Activated CD4-positive, alpha-beta T cell treated with anti-CD3 and anti-CD28 coated beads, Interleukin-2, amount 10 ng/mL, durations not matched to agents 24 days and 14 days (primary cell): ENCODE measurements at regions of chr2 and their contacts with region 1.

Region 1: DNA sequence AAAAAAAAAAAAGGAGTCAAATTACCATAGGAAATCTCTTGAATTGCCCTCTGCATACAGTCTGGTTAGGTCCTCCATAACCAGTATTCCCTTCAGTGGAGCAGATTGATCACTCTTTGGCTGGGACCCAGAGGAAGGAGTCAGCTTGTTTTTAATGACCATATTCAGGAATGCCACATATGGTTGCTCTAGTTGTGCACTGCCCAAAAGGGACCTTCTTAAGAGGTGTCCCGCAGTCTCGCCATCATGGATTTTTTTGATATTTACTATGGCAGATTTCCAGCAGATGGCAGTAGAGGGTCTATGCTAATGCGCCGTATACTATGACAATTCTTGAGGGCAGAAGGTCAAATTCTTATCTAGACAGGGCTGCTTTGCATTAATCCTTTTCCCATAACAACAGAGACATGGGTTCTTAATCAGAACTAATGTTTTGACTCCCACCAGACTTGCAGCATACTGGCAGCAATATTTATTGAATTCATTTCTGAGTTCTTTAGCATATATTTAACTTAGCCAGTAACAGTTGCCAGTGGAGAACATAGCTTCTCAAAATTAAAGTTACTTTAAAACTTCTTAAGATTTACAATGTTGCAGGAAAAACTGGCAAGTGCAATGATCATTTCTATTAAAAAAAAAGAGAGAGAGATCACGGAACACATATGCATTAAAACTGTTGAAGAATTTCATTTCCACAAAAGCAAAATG is 31.8 kb upstream of the INPP4A start:
- DNase-seq: peak; percentile 92
- H3K4me3 Mint-ChIP-seq: no peak overlapping the region
- H3K27ac Mint-ChIP-seq: no peak overlapping the region
- H3K4me1 Mint-ChIP-seq: peaks cover 10% of the 10 kb centered on the region
- H3K27me3 Mint-ChIP-seq: peaks cover 10% of the 10 kb centered on the region

Region 2: GRCh38 chr2:98426771-98427170 is 13.9 kb after region 1 on chr2:
- intact Hi-C with region 1: no loop called
- DNase-seq: peak; percentile 4
- H3K4me3 Mint-ChIP-seq: no peak overlapping the region
- H3K27ac Mint-ChIP-seq: no peak overlapping the region
- H3K4me1 Mint-ChIP-seq: no peaks in the 10 kb centered on the region
- H3K27me3 Mint-ChIP-seq: peaks cover 12% of the 10 kb centered on the region

Region 3: GRCh38 chr2:98508709-98509066 is 95.8 kb after region 1 on chr2:
- intact Hi-C with region 1: loop called (anchors 2 kb)
- DNase-seq: peak; percentile 82
- H3K4me3 Mint-ChIP-seq: peak overlapping the region; percentile 73
- H3K27ac Mint-ChIP-seq: peak overlapping the region; percentile 91
- H3K4me1 Mint-ChIP-seq: peaks cover 69% of the 10 kb centered on the region
- H3K27me3 Mint-ChIP-seq: no peaks in the 10 kb centered on the region

Region 4: GRCh38 chr2:98518090-98518489 is 105.2 kb after region 1 on chr2:
- intact Hi-C with region 1: loop called (anchors 1 kb)
- DNase-seq: peak; percentile 83
- H3K4me3 Mint-ChIP-seq: no peak overlapping the region
- H3K27ac Mint-ChIP-seq: no peak overlapping the region
- H3K4me1 Mint-ChIP-seq: peaks cover 41% of the 10 kb centered on the region
- H3K27me3 Mint-ChIP-seq: no peaks in the 10 kb centered on the region

Region 5: GRCh38 chr2:98552499-98553179 is 139.7 kb after region 1 on chr2:
- intact Hi-C with region 1: loop called (anchors 2 kb)
- DNase-seq: no peak
- H3K4me3 Mint-ChIP-seq: no peak overlapping the region
- H3K27ac Mint-ChIP-seq: peak overlapping the region; percentile 54
- H3K4me1 Mint-ChIP-seq: peaks cover 68% of the 10 kb centered on the region
- H3K27me3 Mint-ChIP-seq: no peaks in the 10 kb centered on the region

Region 6: DNA sequence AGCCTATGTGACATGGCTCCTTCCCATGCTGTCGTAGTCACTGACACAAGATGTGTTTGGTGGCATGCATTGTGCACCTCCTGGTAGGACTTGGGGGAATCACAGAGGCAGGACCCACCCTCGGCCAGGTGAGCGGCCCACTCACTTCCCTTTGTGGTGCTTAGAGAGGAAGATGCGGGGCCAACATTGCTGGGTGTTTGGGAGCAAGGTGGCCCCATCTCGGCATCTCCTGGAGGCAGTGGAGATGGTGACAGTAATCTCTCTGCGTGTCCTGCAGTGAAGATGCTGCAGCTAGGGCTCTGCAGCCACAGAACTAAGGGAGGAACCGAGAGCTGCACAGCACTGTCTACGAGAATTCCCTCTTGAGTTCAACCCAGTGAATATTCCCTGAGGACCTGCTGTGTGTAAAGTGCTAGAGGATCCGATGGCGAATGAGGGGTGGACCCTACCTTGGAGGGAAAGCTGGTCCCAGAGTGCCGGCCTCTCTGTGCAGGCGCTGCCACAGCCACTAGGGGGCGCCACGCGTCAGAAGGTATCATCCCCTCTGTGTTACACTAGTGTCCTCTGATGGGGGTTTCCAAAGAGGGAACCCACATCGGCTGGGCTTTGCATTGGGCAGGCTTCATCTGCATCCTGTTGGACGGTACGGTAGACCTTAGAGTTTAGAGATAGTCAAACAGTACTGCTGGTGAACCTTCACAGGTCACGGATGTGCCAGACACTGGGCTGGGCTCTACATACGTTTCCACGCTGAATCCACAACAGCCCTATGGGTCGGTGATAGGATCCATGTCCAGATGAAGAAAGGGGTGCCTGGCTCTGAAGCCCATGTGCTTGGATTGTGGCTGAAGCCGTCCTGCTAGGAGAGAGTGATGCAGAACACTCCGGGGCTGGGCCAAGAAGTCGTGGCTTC is 156.2 kb after region 1 on chr2:
- intact Hi-C with region 1: loop called (anchors 2 kb)
- DNase-seq: peak; percentile 90
- H3K4me3 Mint-ChIP-seq: no peak overlapping the region
- H3K27ac Mint-ChIP-seq: peak overlapping the region; percentile 16
- H3K4me1 Mint-ChIP-seq: peaks cover 6% of the 10 kb centered on the region
- H3K27me3 Mint-ChIP-seq: no peaks in the 10 kb centered on the region

Region 7: GRCh38 chr2:98601532-98602132 is 188.7 kb after region 1 on chr2:
- intact Hi-C with region 1: loop called (anchors 1 kb)
- DNase-seq: peak; percentile 72
- H3K4me3 Mint-ChIP-seq: no peak overlapping the region
- H3K27ac Mint-ChIP-seq: no peak overlapping the region
- H3K4me1 Mint-ChIP-seq: peaks cover 25% of the 10 kb centered on the region
- H3K27me3 Mint-ChIP-seq: no peaks in the 10 kb centered on the region